Breast epithelium (tissue), 4 donors: ENCODE measurements at regions of chr15 and their contacts with region 1.

Region 1: DNA sequence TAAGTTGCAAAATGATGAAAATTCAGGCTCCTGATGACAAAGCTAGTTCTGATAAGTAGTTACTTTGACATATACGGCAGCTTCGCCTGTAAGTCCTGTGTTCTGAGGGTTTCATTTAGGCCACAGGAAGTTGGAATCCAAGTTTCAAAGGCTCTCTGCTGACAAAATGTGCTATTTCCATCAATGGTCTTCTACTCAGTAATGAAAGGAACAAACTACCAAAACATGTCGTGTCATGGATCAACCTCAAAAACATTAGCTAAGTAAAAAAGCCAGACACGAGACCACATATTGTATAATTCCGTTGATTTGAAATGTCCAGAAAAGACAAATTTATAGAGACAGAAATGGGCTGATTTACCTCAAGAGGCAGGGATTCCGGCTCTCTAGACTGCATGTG is 22.5 kb downstream of the NGRN start:
- DNase-seq: no peak
- H3K4me3 ChIP-seq: no peak overlapping the region
- H3K27ac ChIP-seq: no peak overlapping the region
- H3K4me1 ChIP-seq: no peaks in the 10 kb centered on the region
- H3K27me3 ChIP-seq: no peaks in the 10 kb centered on the region
- CTCF ChIP-seq: no peak
- POLR2A ChIP-seq: no peak

Region 2: GRCh38 chr15:89293012-89293411 is 994.9 kb before region 1 on chr15:
- intact Hi-C with region 1: no loop called
- DNase-seq: no peak
- H3K4me3 ChIP-seq: no peak overlapping the region
- H3K27ac ChIP-seq: no peak overlapping the region
- H3K4me1 ChIP-seq: no peaks in the 10 kb centered on the region
- H3K27me3 ChIP-seq: no peaks in the 10 kb centered on the region
- CTCF ChIP-seq: no peak
- POLR2A ChIP-seq: no peak

Region 3: DNA sequence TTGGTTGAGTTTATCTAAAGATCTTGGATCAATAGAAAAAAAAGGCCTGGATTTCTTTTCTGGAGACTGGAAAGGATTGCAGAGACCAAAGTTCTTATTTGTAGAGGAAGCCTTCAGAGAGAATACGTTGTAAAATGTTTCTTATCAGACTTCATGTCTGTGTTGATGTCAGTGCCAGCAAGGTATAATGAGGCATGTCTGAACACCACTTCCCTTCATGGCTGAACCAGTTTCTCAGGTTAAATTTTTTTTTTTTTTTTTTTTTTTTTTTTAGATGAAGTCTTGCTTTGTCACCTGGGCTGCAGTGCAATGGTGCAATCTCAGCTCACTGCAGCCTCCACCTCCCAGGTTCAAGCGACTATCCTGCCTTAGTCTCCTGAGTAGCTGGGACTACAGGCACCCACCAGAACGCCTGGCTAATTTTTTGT is 46.4 kb after region 1 on chr15:
- intact Hi-C with region 1: loop called (anchors 2 kb)
- DNase-seq: no peak
- H3K4me3 ChIP-seq: no peak overlapping the region
- H3K27ac ChIP-seq: no peak overlapping the region
- H3K4me1 ChIP-seq: no peaks in the 10 kb centered on the region
- H3K27me3 ChIP-seq: no peaks in the 10 kb centered on the region
- CTCF ChIP-seq: no peak
- POLR2A ChIP-seq: no peak

Region 4: DNA sequence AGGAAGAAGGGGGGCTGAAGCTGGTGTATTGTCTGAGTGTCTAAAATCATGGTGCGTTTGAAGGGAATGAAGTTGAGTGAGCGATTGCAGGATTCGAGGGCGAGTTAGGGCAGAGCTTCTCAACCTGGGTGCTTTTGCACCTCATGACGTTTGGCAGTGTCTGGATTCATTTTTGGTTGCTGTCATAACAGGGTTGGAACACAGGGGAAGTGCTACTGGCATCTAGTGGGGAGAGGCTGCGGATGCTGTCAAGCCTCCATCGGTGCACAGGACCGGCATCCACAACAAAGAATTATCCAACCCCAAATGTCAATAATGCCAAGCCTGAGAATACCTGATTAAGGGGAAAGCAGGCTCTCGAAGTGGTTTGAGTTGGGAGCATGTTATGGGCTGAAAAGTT is 1685.5 kb after region 1 on chr15:
- intact Hi-C with region 1: no loop called
- DNase-seq: no peak
- H3K4me3 ChIP-seq: no peak overlapping the region
- H3K27ac ChIP-seq: no peak overlapping the region
- H3K4me1 ChIP-seq: peaks cover 4 to 5% of the 10 kb centered on the region in 2 donors
- H3K27me3 ChIP-seq: no peaks in the 10 kb centered on the region
- CTCF ChIP-seq: no peak
- POLR2A ChIP-seq: no peak